Cardiac septum (tissue), 1 donor: ENCODE measurements at regions of chr18 and their contacts with region 1.

Region 1: GRCh38 chr18:11553098-11553940 is 56.1 kb upstream of the SLC35G4 start:
- DNase-seq: no peak

Region 2: DNA sequence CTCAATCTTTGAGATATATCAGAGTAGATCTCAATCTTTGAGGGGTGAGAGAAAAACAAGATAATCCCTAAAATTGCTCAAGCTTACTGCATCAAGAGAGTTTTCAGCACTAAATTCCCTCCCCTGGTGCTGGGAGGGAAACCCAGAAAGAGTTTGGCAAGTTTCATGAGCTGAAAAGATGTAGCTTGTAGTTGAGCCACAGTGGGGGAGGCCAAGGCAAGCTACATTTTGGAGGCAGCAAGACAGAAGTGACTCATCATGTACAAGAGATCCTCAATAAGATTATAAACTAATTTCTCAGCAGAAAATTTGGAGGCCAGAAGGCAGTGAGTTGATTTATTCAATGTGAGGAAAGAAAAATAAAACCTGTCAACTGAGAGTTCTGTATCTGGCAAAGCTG is 712.1 kb before region 1 on chr18:
- intact Hi-C with region 1: loop called (anchors 10 kb)
- DNase-seq: no peak